ENCODE measurements at regions of chr6 and their contacts with region 1.

Region 1: DNA sequence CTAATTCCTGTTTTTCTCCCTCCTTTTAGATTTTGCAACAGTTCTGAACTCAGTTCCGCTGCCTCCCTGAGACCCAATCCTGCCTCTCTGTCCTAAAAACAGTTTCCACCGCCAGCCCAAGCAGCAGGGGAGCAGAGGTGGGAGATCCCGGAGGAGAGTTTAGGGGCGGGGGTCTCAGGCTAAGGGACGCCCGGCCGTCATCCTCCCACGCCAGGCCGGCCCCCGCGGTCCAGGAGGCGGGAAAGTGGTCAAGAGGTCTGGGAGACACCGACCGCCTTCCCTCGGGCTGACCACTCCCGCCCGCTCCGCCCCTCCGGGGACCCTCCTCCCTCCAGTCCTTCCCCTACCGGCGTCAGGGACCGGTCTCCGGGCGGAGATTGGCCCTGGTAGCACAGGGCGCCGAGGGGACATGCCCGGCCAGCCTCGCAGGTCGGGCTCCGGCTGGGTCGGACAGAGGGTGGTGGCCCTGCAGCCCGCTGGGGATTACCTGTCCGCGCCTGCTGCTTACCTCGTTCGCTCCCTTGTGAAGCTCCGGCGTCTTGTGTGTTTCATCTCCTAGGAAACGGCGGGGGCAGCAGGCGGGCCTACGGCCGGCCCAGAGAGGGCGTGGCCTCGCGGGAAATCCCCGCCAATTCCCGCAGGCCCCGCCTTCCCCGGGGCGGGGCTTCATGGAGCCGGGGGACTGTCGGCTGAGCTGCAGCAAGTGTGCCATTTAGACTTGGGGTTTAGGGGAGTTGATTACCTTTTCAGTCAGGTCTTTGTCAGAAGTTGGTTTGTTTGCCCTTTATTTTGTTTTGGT is at the start of gene MAK:
- DNase-seq: peak; percentile 91
- ATAC-seq: peak; percentile 94
- H3K4me3 Mint-ChIP-seq: peak within 1 kb of the TSS; percentile 83
- H3K27ac Mint-ChIP-seq: peak within 1 kb of the TSS; percentile 77
- H3K4me1 Mint-ChIP-seq: peaks cover 23% of the 10 kb centered on the region
- H3K27me3 Mint-ChIP-seq: peaks cover 31% of the 10 kb centered on the region
- CTCF ChIP-seq: no peak
- total RNA-seq, gene MAK: 0.15 TPM in 1 of 2 replicates, not detected in the other

Region 2: DNA sequence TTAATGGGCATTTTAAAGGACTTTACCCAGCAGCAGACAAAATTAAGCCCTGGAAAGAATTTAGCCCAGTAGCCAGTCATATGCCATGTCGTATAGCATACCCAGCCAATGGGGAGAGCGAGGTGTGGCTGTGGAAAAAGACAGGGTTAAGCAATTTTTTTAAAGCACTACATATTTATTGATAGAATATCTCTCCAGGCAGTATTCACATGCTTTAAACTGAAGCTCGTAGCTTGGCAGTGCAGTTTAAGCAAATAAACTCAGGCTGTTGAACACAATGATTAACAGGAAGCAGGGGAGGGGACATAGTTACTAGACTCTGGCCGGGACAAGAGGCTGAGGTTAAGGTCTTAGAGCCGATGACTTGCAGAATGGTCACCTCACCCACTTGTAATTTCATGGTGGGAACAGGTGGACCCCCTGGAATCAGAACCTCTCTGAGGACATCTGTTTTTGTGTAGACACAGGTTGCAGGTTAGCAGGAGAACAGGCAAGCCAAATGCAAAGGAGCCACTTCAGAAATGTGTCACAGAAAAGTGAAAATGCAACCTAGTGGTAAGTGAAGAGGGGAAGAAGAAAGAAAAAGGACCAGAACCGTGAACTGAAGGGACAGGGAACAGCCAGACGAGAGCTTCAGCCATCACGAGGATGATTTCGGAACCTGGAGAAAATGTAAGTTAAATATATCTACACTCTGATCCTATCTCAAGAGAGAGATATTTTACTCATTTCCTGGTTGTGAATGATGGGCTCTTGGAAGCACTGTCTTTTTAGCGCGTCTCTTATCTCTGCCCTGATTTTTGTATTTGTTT is 309.8 kb before region 1 on chr6:
- CTCF ChIA-PET with region 1: no interaction called
- POLR2A ChIA-PET with region 1: interaction called, 7 read pairs
- intact Hi-C with region 1: loop called (anchors 2 kb)
- DNase-seq: no peak
- ATAC-seq: peak; percentile 57
- H3K4me3 Mint-ChIP-seq: peak overlapping the region; percentile 97
- H3K27ac Mint-ChIP-seq: peak overlapping the region; percentile 96
- H3K4me1 Mint-ChIP-seq: peaks cover 65% of the 10 kb centered on the region
- H3K27me3 Mint-ChIP-seq: no peaks in the 10 kb centered on the region
- CTCF ChIP-seq: no peak

Region 3: DNA sequence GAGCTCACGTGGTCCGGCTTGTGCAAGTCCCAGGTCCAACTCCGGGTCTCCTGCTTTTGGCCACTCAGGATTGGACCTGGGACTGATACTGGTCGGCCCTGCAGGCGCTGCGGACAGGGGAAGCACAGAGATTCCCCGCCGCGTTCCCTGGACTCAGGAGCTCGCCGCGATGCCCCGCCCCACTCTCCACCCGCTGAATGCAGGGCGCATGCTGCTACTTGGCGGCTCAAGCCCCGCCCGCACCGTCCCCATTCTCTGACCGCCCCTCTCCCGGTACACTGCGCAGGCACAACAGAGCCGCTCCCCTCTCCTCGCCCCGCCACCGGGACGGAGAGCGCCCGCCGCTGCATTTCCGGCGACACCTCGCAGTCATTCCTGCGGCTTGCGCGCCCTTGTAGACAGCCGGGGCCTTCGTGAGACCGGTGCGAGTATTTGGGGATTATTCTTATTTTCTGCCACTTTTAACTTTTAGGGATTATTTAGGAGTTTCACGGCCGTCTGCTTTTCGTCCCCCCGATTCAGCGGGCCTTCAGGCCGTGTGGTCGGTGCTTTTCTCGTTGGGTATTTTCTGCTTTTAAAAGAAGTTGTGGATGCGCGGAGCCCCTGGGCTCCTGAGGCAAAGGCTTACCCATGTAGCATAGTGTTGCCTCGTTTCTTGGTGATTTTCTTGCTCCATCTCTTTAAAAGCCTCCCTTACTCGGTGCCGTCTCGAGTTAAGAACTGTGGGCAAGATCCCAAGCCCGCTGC is 115.2 kb before region 1 on chr6 and contains the start of gene TMEM14C:
- CTCF ChIA-PET with region 1: no interaction called
- POLR2A ChIA-PET with region 1: no interaction called
- intact Hi-C with region 1: loop called (anchors 2 kb)
- DNase-seq: peak; percentile 78
- ATAC-seq: peak; percentile 98
- H3K4me3 Mint-ChIP-seq: peak within 1 kb of the TSS; percentile 93
- H3K27ac Mint-ChIP-seq: peak within 1 kb of the TSS; percentile 89
- H3K4me1 Mint-ChIP-seq: peaks cover 39% of the 10 kb centered on the region
- H3K27me3 Mint-ChIP-seq: no peaks in the 10 kb centered on the region
- CTCF ChIP-seq: no peak
- total RNA-seq, gene TMEM14C: 23.0 and 23.1 TPM in 2 replicates

Region 4: DNA sequence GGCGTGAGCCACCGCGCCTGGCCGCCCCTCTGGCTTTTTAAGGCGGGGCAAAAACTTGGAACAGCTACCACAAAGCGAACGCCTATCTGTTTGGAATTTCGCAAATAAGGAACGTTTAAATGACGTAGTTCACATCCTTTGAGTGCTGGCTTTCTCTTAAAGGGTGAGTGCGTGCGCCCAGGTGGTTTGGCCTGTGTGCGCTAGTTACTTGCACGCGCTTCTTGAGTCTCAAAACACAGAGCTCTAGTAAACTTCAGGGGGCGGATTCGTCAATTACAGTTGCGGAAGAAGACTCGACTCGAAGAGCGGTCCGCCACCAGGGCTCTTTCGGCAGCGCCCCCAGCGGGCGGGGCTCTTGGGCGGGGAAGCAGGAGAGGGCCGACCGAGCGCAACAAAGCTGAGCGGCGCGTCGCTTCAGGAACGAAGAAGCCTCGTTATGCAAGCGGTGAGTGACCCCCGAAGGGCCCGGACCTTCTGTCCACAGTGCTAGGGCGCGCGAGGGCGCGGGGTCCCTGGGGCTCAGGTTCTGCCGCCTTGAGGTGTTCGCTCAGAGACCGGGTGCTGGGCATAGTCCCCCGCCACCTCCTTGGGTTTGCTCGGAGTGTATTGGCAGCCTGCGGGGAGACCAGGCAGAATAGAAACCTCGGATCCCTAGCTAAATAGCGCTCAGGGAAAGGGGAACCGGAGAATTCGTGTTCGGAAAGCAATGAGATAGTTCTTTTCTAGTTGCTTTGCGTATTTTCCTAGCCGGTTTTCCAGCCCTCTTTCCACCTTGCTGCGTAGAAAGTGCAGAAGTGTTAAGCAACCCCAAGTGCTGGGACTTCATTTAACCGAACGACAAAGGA is 48.7 kb after region 1 on chr6 and contains the start of gene SYCP2L:
- CTCF ChIA-PET with region 1: no interaction called
- POLR2A ChIA-PET with region 1: interaction called, 7 read pairs
- intact Hi-C with region 1: loop called (anchors 1 kb)
- DNase-seq: no peak
- ATAC-seq: peak; percentile 10
- H3K4me3 Mint-ChIP-seq: peak within 1 kb of the TSS; percentile 67
- H3K27ac Mint-ChIP-seq: no peak within 1 kb of the TSS
- H3K4me1 Mint-ChIP-seq: peaks cover 39% of the 10 kb centered on the region
- H3K27me3 Mint-ChIP-seq: peaks cover 48% of the 10 kb centered on the region
- CTCF ChIP-seq: no peak
- total RNA-seq, gene SYCP2L: 0.13 and 0.17 TPM in 2 replicates

Region 5: GRCh38 chr6:11093589-11094410 is 255.6 kb after region 1 on chr6 and contains the start of gene SMIM13:
- CTCF ChIA-PET with region 1: no interaction called
- POLR2A ChIA-PET with region 1: no interaction called
- intact Hi-C with region 1: loop called (anchors 1 kb)
- DNase-seq: peak; percentile 90
- ATAC-seq: peak; percentile 90
- H3K4me3 Mint-ChIP-seq: peak within 1 kb of the TSS; percentile 96
- H3K27ac Mint-ChIP-seq: peak within 1 kb of the TSS; percentile 98
- H3K4me1 Mint-ChIP-seq: peaks cover 20% of the 10 kb centered on the region
- H3K27me3 Mint-ChIP-seq: peaks cover 3% of the 10 kb centered on the region
- CTCF ChIP-seq: no peak
- total RNA-seq, gene SMIM13: 5.8 and 5.9 TPM in 2 replicates